CD4-positive, alpha-beta memory T cell (primary cell): ENCODE measurements at regions of chr19 and their contacts with region 1.

Region 1: DNA sequence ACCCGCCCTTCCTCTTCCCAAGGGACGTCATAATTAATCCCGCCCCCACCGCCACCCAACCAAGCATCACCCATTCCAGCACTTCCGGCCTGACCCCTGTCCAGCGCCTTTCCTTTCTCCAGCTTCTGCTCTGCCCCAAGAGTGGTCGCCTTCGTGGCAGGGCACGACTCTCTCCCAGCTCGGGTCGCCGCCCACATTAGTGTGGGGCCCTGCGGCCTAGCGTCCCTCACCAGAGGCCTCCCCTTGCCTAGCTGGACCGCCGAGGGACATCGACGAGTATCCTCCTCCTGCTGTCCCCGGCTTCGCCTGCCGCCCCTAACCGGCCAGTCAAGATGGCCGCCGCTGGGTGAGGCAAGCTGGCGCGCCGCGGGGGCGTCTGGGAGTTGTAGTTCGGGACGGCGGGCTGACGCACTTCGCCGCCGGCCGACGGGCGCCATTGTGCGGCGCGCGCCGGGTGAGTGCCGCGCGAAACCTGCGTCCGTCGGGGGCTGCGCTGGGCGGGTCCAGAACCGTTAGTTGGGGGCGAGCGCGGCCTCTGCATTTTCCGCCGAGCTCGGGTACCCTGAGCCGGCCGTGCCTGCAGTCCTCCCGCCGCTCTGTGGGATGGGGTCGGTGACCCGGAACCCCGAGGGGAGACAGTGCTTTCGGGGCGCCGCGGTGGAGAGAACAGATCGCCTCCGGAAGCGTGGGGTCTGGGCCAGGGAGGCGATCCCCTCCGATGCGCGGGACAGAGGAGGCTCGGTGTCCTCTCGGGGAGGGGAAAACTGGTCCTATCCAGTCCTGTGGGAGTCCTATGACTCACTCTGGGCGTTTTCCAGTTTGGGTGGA is at the start of gene ZNF274:
- DNase-seq: peak; percentile 92 to 94 (median 93)
- H3K4me3 ChIP-seq: peak within 1 kb of the TSS; percentile 97 to 100
- H3K4me3 Mint-ChIP-seq: peak within 1 kb of the TSS; percentile 86 to 97 (median 92)
- H3K27ac ChIP-seq: peak within 1 kb of the TSS; percentile 97
- H3K27ac Mint-ChIP-seq: peak within 1 kb of the TSS; percentile 97 to 99 (median 99)
- H3K4me1 ChIP-seq: peaks cover 20% of the 10 kb centered on the region
- H3K4me1 Mint-ChIP-seq: peaks cover 12 to 25% (median 18%) of the 10 kb centered on the region in 4 donors
- H3K27me3 ChIP-seq: no peaks in the 10 kb centered on the region
- H3K27me3 Mint-ChIP-seq: no peaks in the 10 kb centered on the region
- total RNA-seq, gene ZNF274: 76.5 to 77.1 TPM

Region 2: DNA sequence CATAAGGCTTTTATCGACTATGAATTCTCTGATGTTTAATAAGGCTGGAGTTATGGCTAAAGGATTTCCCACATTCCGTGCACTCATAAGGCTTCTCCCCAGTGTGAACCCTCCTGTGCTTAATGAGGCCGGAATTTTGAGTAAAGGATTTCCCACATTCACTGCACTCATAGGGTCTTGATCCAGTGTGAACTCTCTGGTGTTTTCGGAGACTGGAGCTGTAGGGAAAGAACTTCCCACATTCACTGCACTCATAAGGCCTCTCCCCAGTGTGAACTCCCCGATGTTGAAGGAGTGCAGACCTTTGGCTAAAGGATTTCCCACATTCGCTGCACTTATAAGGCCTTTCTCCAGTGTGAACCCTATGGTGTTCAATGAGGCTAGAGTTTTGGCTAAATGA is 481.6 kb before region 1 on chr19:
- CTCF ChIA-PET with region 1: no interaction called
- POLR2A ChIA-PET with region 1: no interaction called
- intact Hi-C with region 1: no loop called
- DNase-seq: no peak
- H3K4me3 ChIP-seq: no peak overlapping the region
- H3K4me3 Mint-ChIP-seq: peak overlapping the region in 1 of 8 donors; percentile 20
- H3K27ac ChIP-seq: no peak overlapping the region
- H3K27ac Mint-ChIP-seq: no peak overlapping the region
- H3K4me1 ChIP-seq: no peaks in the 10 kb centered on the region
- H3K4me1 Mint-ChIP-seq: peaks cover 0 to 7% (median 4%) of the 10 kb centered on the region in 4 donors
- H3K27me3 ChIP-seq: no peaks in the 10 kb centered on the region
- H3K27me3 Mint-ChIP-seq: peaks cover 0 to 1% of the 10 kb centered on the region in 2 donors

Region 3: DNA sequence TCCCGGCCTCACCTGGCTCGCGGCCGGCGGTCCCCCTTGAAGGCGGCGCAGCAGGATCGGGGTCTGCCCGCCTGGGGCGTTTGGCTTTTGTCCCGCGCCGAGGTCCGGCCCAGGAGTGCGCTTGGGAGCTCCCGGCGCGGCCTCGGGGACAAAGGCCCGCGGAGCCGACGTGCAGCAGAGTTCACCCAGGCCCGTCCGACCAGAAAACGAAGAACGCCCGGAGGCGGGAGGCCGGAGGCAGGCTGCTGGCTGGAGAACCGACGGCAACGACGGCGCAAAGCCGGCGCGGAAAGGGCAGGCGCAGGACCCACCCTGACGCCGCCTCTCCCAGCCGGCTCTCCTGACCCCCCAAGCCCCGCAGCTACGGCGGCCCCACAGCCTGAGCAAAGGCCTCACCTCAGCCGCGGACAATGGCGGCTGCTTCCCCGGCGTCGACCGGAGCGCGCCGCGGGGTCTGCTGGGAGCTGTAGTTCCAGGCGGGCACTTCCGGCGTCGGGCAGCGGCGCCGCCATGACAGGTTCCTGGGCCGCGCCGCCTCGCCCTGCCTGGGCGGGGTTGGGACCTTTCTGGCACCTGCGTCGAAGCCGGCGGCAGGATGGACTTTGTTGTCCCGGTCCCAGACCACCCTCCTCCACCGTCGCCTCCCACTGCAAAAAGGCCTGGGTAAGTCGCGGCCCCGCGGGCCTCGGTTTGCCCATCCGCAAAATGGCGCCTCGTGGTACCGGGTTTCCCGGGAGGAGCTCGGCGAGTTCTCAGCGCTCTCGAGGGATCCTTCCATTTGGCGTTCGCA is 180.6 kb before region 1 on chr19 and contains the start of gene ZNF606:
- CTCF ChIA-PET with region 1: no interaction called
- POLR2A ChIA-PET with region 1: interaction called, 19 read pairs
- intact Hi-C with region 1: no loop called
- DNase-seq: peak; percentile 83 to 89 (median 86)
- H3K4me3 ChIP-seq: peak within 1 kb of the TSS; percentile 93 to 98
- H3K4me3 Mint-ChIP-seq: peak within 1 kb of the TSS; percentile 76 to 87 (median 84)
- H3K27ac ChIP-seq: peak within 1 kb of the TSS; percentile 80
- H3K27ac Mint-ChIP-seq: peak within 1 kb of the TSS; percentile 78 to 93 (median 87)
- H3K4me1 ChIP-seq: peaks cover 22% of the 10 kb centered on the region
- H3K4me1 Mint-ChIP-seq: peaks cover 15 to 34% (median 26%) of the 10 kb centered on the region in 4 donors
- H3K27me3 ChIP-seq: no peaks in the 10 kb centered on the region
- H3K27me3 Mint-ChIP-seq: no peaks in the 10 kb centered on the region
- total RNA-seq, gene ZNF606: 25.5 to 37.3 TPM

Region 4: DNA sequence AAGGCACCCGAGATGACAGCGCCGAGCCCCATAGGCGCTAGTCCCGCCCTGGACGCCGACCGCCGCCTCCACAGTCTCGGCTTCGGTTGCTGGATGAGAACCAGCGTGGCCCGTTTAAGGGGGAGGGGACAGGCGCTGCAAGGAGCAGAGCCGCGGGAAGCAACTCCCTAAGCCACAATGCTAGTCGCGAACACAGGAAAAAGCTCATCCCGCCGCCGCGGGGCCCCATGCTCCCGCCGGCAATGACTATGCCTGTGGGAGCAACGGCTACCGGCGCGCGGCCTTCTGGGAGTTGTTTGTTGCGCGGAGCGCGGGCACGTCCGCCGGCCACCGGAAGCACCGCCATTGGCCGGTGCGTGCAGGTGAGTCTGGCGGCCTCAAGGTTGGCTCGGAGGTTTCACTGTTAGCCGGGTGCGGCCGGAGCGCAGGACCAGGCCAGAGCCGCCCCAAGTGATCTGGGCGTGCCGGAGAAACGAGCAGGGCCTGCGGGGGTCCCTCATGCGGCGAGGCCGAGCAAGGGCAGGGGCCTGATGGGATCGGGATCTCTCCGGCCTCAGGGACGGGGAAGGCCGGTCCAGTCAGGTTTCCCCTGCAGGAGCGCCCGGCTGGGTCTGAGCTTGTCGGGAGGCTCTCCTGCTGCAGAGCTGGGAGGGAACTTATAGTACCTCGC is 45.5 kb after region 1 on chr19 and contains the start of gene ZNF544:
- CTCF ChIA-PET with region 1: no interaction called
- POLR2A ChIA-PET with region 1: interaction called, 16 read pairs
- intact Hi-C with region 1: loop called (anchors 1 kb)
- DNase-seq: peak; percentile 33 to 60 (median 41)
- H3K4me3 ChIP-seq: peak within 1 kb of the TSS; percentile 68 to 70
- H3K4me3 Mint-ChIP-seq: peak within 1 kb of the TSS; percentile 92 to 97 (median 94)
- H3K27ac ChIP-seq: peak within 1 kb of the TSS; percentile 50
- H3K27ac Mint-ChIP-seq: peak within 1 kb of the TSS; percentile 82 to 95 (median 88)
- H3K4me1 ChIP-seq: peaks cover 15% of the 10 kb centered on the region
- H3K4me1 Mint-ChIP-seq: peaks cover 15 to 31% (median 24%) of the 10 kb centered on the region in 4 donors
- H3K27me3 ChIP-seq: no peaks in the 10 kb centered on the region
- H3K27me3 Mint-ChIP-seq: no peaks in the 10 kb centered on the region
- total RNA-seq, gene ZNF544: 63.3 to 67.6 TPM

Region 5: GRCh38 chr19:58362272-58362994 is 179.2 kb after region 1 on chr19 and contains the start of gene ZNF497:
- CTCF ChIA-PET with region 1: no interaction called
- POLR2A ChIA-PET with region 1: interaction called, 12 read pairs
- intact Hi-C with region 1: no loop called
- DNase-seq: peak; percentile 95 to 96 (median 95)
- H3K4me3 ChIP-seq: peak within 1 kb of the TSS; percentile 90 to 98
- H3K4me3 Mint-ChIP-seq: peak within 1 kb of the TSS; percentile 90 to 98 (median 93)
- H3K27ac ChIP-seq: peak within 1 kb of the TSS; percentile 69
- H3K27ac Mint-ChIP-seq: peak within 1 kb of the TSS; percentile 79 to 98 (median 94)
- H3K4me1 ChIP-seq: peaks cover 11% of the 10 kb centered on the region
- H3K4me1 Mint-ChIP-seq: peaks cover 6 to 13% (median 9%) of the 10 kb centered on the region in 4 donors
- H3K27me3 ChIP-seq: no peaks in the 10 kb centered on the region
- H3K27me3 Mint-ChIP-seq: no peaks in the 10 kb centered on the region
- total RNA-seq, gene ZNF497: 1.7 to 2.0 TPM

Region 6: DNA sequence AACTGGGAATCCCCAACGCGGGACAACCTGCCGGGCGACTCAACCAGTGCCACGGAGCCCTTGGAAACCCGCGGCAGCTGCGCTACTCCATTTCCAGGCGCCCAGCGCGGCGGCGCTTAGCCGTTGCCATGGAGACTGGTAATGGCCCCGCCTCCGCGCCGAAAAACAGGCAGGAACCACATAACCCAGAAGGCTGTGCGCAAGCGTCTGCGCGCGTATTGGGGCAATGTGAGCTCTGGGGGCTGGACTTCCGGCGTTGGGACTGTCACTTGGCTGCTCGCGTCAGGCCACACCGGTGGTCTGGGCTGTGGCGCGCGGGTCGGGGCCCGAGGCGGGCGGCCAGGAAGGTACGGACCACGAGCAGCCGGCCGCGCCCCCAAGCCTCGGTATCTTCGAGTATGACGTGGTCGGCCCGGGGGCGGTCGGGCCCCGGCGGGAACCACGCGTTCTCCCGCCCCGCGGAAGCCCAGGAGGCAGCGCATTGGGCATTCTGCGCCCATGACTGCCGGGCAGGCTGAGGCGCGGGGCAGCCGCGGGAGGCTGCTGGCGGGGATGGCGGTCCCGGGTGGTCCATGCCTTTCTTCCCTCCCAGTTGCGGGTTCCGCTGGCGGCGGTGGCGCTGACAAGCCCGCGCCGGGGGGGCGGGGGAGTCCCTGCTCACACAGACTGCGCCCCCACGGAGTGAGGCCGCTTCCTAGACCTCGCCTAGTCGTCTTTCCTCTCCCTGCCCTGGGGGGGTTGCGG is 268.3 kb after region 1 on chr19 and contains the start of gene ZNF324B:
- CTCF ChIA-PET with region 1: no interaction called
- POLR2A ChIA-PET with region 1: interaction called, 5 read pairs
- intact Hi-C with region 1: loop called (anchors 1 kb)
- DNase-seq: peak; percentile 96 to 97 (median 96)
- H3K4me3 ChIP-seq: peak within 1 kb of the TSS; percentile 60 to 69
- H3K4me3 Mint-ChIP-seq: peak within 1 kb of the TSS; percentile 85 to 93 (median 88)
- H3K27ac ChIP-seq: peak within 1 kb of the TSS; percentile 67
- H3K27ac Mint-ChIP-seq: peak within 1 kb of the TSS; percentile 67 to 93 (median 84)
- H3K4me1 ChIP-seq: peaks cover 7% of the 10 kb centered on the region
- H3K4me1 Mint-ChIP-seq: peaks cover 13 to 31% (median 19%) of the 10 kb centered on the region in 4 donors
- H3K27me3 ChIP-seq: no peaks in the 10 kb centered on the region
- H3K27me3 Mint-ChIP-seq: peaks cover 6 to 11% of the 10 kb centered on the region in 2 donors
- total RNA-seq, gene ZNF324B: 13.1 to 13.7 TPM

Region 7: DNA sequence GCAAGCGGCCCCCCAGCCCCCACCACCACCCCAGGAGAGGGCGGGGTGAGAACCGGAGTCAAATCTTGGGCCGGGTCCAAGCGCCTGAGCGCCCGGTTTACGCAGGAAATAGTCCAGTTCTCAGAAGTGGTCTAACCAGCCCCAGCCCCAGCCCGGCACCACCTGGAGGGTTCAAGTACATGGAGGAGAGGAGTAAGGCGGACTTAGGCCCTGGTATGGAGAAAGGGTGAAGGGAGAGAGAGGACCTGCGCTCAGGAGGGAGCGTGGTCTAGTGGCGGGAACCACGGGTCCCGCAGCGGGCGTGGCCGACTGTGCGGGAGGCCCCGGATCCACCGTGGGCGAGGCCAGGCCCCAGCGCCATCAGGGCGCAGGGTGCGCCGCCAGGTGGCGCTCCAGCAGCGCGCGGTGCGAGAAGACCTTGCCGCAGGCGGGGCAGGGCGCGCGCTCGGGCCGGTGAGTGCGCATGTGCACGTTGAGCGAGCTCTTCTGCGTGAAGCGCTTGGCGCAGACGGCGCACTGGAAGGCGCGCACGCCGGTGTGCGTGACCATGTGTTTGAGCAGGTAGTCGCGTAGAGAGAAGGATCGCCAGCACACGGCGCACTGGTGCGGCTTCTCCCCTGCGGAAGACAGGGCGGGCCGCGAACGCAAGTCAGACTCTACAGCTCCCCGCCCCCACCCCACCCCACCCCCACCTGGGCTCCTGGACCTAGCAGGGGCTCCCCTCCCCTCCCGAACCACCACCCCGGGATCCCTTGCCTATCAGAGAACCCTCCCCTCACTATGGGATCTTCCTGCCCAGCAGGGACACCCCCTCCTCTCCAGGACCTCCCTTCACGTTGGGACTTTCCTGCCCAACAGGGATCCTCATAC is 330.7 kb after region 1 on chr19:
- CTCF ChIA-PET with region 1: no interaction called
- POLR2A ChIA-PET with region 1: interaction called, 27 read pairs
- intact Hi-C with region 1: loop called (anchors 1 kb)
- DNase-seq: peak; percentile 93 to 95 (median 94)
- H3K4me3 ChIP-seq: peak overlapping the region in 1 of 2 donors; percentile 32
- H3K4me3 Mint-ChIP-seq: peak overlapping the region; percentile 74 to 88 (median 84)
- H3K27ac ChIP-seq: peak overlapping the region; percentile 61
- H3K27ac Mint-ChIP-seq: peak overlapping the region; percentile 82 to 93 (median 91)
- H3K4me1 ChIP-seq: peaks cover 31% of the 10 kb centered on the region
- H3K4me1 Mint-ChIP-seq: peaks cover 11 to 49% (median 29%) of the 10 kb centered on the region in 4 donors
- H3K27me3 ChIP-seq: no peaks in the 10 kb centered on the region
- H3K27me3 Mint-ChIP-seq: no peaks in the 10 kb centered on the region